ENCODE measurements at regions of chr12 and their contacts with region 1.

Region 1: DNA sequence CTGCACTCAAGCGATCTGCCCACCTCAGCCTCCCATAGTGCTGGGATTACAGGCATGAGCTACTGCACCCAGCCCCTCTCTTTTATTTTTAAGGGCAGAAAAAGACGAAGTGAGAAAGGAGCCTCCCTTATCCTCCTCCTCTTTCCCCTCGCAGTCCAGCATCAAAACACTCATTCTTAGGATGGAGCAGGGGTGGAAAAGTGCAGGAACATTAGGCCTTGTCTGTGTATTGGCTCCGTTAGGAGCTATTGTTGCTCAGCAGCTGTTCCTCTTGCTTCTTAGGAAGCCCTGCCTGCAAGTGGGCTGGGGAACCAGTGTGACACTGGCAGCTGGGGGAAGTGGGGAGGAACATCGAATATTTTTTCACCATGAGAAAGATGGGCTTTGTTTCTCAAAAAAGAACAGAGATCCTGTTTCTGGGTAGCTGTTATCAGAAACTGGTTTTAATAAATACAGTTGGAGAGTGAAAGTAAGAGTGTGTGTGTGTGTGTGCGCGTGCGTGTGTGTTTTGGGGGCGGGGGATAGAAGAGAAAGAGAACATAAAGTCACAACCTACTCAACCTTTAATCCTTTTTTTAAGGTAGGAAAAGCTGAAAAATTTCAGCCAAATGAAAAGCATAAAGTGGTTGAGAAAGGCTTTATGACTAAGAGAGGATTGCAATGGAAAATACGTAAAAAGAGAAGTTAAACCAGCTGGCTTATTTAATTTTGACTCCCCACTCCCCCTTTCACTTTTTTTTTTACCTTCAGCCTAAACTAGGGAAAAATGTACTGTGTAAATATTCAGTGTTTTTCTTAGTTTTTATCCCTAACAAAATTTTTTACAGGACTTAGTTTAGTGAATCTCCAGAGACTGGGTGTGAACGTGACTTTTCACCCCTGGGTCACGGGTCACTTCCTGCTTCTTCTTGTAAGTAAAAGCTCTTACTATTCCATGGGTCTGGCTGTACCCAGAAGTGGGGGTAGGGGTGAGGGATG is 197.2 kb upstream of the PLEKHG7 start:
- DNase-seq: peak; percentile 86
- ATAC-seq: peak; percentile 41
- H3K4me3 ChIP-seq: peak overlapping the region; percentile 46
- H3K27ac ChIP-seq: peak overlapping the region; percentile 100
- H3K4me1 ChIP-seq: peaks cover 53% of the 10 kb centered on the region
- H3K27me3 ChIP-seq: no peaks in the 10 kb centered on the region
- CTCF ChIP-seq: no peak
- EP300 ChIP-seq: peak; percentile 15 to 44; a peak in 2 of 4 replicates
- POLR2A ChIP-seq: peak; percentile 56; the same call in 1 of the 2 replicates
- RAD21 ChIP-seq: no peak

Region 2: GRCh38 chr12:91811481-91812287 is 693.9 kb before region 1 on chr12:
- CTCF ChIA-PET with region 1: interaction called, 10 read pairs
- POLR2A ChIA-PET with region 1: no interaction called
- RAD21 ChIA-PET with region 1: interaction called, 4 read pairs
- SMC1A ChIA-PET with region 1: interaction called, 10 read pairs
- in situ Hi-C with region 1: no loop called
- intact Hi-C with region 1: no loop called
- DNase-seq: peak; percentile 40
- ATAC-seq: peak; percentile 95
- H3K4me3 ChIP-seq: no peak overlapping the region
- H3K27ac ChIP-seq: no peak overlapping the region
- H3K4me1 ChIP-seq: no peaks in the 10 kb centered on the region
- H3K27me3 ChIP-seq: no peaks in the 10 kb centered on the region
- CTCF ChIP-seq: peak; percentile 68 to 86 (median 79)
- EP300 ChIP-seq: no peak
- POLR2A ChIP-seq: no peak
- RAD21 ChIP-seq: peak; percentile 87

Region 3: GRCh38 chr12:92338671-92339070 is 166.9 kb before region 1 on chr12:
- CTCF ChIA-PET with region 1: no interaction called
- POLR2A ChIA-PET with region 1: no interaction called
- RAD21 ChIA-PET with region 1: no interaction called
- SMC1A ChIA-PET with region 1: no interaction called
- in situ Hi-C with region 1: no loop called
- intact Hi-C with region 1: no loop called
- DNase-seq: no peak
- ATAC-seq: no peak
- H3K4me3 ChIP-seq: no peak overlapping the region
- H3K27ac ChIP-seq: no peak overlapping the region
- H3K4me1 ChIP-seq: no peaks in the 10 kb centered on the region
- H3K27me3 ChIP-seq: no peaks in the 10 kb centered on the region
- CTCF ChIP-seq: no peak
- EP300 ChIP-seq: no peak
- POLR2A ChIP-seq: no peak
- RAD21 ChIP-seq: no peak

Region 4: GRCh38 chr12:92408072-92408900 is 97.3 kb before region 1 on chr12:
- CTCF ChIA-PET with region 1: interaction called, 10 read pairs
- POLR2A ChIA-PET with region 1: interaction called, 14 read pairs
- RAD21 ChIA-PET with region 1: interaction called, 46 read pairs
- SMC1A ChIA-PET with region 1: interaction called, 56 read pairs
- in situ Hi-C with region 1: no loop called
- intact Hi-C with region 1: loop called (anchors 2 kb)
- DNase-seq: no peak
- ATAC-seq: peak; percentile 74
- H3K4me3 ChIP-seq: no peak overlapping the region
- H3K27ac ChIP-seq: peak overlapping the region; percentile 24
- H3K4me1 ChIP-seq: peaks cover 31% of the 10 kb centered on the region
- H3K27me3 ChIP-seq: no peaks in the 10 kb centered on the region
- CTCF ChIP-seq: peak; percentile 58 to 82 (median 72)
- EP300 ChIP-seq: no peak
- POLR2A ChIP-seq: no peak
- RAD21 ChIP-seq: peak; percentile 94

Region 5: DNA sequence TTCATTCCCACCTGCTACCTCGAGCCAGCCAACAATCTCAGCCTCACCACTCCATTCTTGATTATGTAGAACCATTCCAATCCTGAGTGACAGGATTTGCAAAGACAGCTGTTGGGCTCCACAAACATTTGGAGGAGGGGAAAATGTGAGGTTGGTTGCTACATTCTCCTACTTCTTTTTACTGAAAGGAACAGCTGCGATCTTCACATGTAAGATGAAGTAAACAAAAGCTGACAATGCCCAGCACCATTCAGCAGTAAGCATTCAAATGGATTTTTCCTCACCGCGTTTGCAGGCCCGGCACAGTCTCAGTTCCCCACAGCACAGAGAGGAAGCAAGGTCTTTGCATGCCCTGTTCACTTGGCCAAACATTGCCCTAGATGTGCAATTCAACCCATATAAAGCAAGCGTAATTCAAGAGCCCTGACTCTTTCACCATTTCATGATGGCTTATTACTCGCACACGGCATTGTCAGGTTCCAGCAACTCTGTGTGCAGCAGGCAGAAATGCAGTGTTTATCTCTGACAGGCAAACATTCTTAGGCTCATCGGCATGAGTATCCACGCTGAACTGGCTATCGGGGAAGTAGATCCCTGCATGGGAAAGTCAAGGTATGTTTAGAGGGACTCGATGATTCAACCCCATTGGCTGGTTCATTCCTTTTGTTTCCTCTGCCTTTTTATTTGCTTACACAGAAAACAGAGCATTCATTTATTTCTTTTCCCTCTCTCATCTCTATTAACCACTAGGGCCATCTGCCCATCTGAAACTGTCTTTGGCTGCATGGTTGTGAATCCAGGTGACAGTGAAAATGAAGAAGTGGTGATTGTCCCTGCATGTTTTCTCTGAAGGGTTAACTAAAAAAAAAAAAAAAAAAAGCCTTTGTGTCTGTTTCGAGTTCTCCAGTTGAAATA is 38.9 kb before region 1 on chr12:
- CTCF ChIA-PET with region 1: interaction called, 13 read pairs
- POLR2A ChIA-PET with region 1: interaction called, 32 read pairs
- RAD21 ChIA-PET with region 1: interaction called, 97 read pairs
- SMC1A ChIA-PET with region 1: interaction called, 64 read pairs
- in situ Hi-C with region 1: no loop called
- intact Hi-C with region 1: loop called (anchors 1 kb)
- DNase-seq: peak; percentile 90
- ATAC-seq: peak; percentile 39
- H3K4me3 ChIP-seq: peak overlapping the region; percentile 82
- H3K27ac ChIP-seq: peak overlapping the region; percentile 99
- H3K4me1 ChIP-seq: peaks cover 62% of the 10 kb centered on the region
- H3K27me3 ChIP-seq: no peaks in the 10 kb centered on the region
- CTCF ChIP-seq: no peak
- EP300 ChIP-seq: peak; percentile 65 to 70; a peak in 3 of 4 replicates
- POLR2A ChIP-seq: peak; percentile 85
- RAD21 ChIP-seq: peak; percentile 5

Region 6: GRCh38 chr12:92493816-92494215 is 11.7 kb before region 1 on chr12:
- CTCF ChIA-PET with region 1: interaction called, 36 read pairs
- POLR2A ChIA-PET with region 1: interaction called, 44 read pairs
- RAD21 ChIA-PET with region 1: interaction called, 198 read pairs
- SMC1A ChIA-PET with region 1: interaction called, 292 read pairs
- in situ Hi-C with region 1: no loop called
- intact Hi-C with region 1: no loop called
- DNase-seq: no peak
- ATAC-seq: peak; percentile 57
- H3K4me3 ChIP-seq: no peak overlapping the region
- H3K27ac ChIP-seq: peak overlapping the region; percentile 81
- H3K4me1 ChIP-seq: peaks cover 74% of the 10 kb centered on the region
- H3K27me3 ChIP-seq: no peaks in the 10 kb centered on the region
- CTCF ChIP-seq: no peak
- EP300 ChIP-seq: peak in 1 of 2 experiments; percentile 36; a peak in 1 of 4 replicates
- POLR2A ChIP-seq: no peak
- RAD21 ChIP-seq: no peak

Region 7: DNA sequence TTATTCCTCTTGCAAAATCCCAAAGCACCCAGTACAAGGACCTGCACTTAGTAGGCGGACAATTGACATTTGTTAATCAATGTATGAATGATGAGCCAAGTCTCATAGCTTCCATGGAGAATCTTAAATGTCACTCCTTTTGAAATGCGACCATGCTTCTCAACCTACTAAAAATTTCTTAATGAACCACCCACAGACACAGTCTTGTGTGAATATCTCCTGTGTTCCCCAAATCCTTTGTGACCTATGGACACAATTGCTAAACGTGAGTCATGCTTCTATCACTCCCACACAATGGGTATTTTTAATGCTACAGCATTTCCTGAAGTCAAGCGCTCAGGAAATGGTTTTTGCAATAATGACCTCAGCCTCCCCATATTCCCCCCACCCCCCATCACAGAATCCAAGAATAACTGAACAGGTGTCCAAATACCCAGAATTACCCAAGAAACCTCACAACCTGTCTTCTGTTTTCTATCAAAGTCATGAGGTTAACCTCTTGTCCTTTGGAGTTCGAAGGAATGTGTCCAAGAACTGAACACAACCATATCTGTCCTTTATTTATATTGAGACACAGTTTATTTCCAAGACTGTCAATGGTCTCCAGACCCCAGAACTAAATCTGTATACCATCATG is 33.7 kb after region 1 on chr12:
- CTCF ChIA-PET with region 1: interaction called, 59 read pairs
- POLR2A ChIA-PET with region 1: interaction called, 168 read pairs
- RAD21 ChIA-PET with region 1: interaction called, 346 read pairs
- SMC1A ChIA-PET with region 1: interaction called, 228 read pairs
- in situ Hi-C with region 1: no loop called
- intact Hi-C with region 1: loop called (anchors 1 kb)
- DNase-seq: peak; percentile 93
- ATAC-seq: peak; percentile 54
- H3K4me3 ChIP-seq: no peak overlapping the region
- H3K27ac ChIP-seq: peak overlapping the region; percentile 99
- H3K4me1 ChIP-seq: peaks cover 72% of the 10 kb centered on the region
- H3K27me3 ChIP-seq: no peaks in the 10 kb centered on the region
- CTCF ChIP-seq: no peak
- EP300 ChIP-seq: peak; percentile 90 to 98
- POLR2A ChIP-seq: no peak
- RAD21 ChIP-seq: 0 out of 2 replicates have a peak, but pooled peaks have one; percentile 36

Region 8: DNA sequence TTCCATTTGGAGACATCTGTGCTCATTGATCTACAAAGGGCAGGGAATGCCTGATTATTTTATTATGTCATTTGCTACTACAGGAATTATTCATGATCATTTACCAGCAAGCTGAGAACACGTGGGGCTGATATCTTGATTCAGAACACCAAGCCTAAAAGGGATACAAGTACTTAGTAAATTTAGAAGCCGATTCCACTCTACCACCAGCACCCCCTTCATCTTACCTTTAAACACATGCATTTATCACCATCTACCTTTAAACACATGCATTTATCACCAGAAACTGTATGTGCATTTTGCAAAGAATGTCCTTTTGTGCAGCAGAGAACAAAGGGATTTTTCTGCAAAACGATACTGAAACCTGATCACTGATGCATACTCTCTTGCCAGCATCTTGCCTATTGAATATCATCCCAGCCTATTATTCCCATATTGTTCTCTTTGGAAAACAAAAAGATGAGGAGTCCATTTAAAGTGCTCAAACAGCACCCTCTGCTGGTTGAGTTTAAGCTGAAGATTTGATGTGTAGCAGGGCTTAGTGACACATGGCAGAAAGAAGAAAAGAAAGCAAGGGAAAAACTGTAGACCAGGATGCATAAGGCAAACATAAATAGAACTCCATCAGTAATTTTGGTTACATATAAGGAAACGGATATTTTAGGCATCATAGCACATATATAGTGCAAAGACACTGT is 64.7 kb after region 1 on chr12:
- CTCF ChIA-PET with region 1: interaction called, 179 read pairs
- POLR2A ChIA-PET with region 1: interaction called, 170 read pairs
- RAD21 ChIA-PET with region 1: interaction called, 356 read pairs
- SMC1A ChIA-PET with region 1: interaction called, 805 read pairs
- in situ Hi-C with region 1: no loop called
- intact Hi-C with region 1: loop called (anchors 1 kb)
- DNase-seq: peak; percentile 93
- ATAC-seq: peak; percentile 94
- H3K4me3 ChIP-seq: no peak overlapping the region
- H3K27ac ChIP-seq: peak overlapping the region; percentile 55
- H3K4me1 ChIP-seq: peaks cover 11% of the 10 kb centered on the region; the same call in 1 of the 2 replicates
- H3K27me3 ChIP-seq: no peaks in the 10 kb centered on the region
- CTCF ChIP-seq: peak; percentile 47 to 76 (median 48); a peak in 5 of 6 replicates
- EP300 ChIP-seq: no peak
- POLR2A ChIP-seq: no peak
- RAD21 ChIP-seq: peak; percentile 81

Region 9: GRCh38 chr12:92608151-92609091 is 102.9 kb after region 1 on chr12:
- CTCF ChIA-PET with region 1: no interaction called
- POLR2A ChIA-PET with region 1: no interaction called
- RAD21 ChIA-PET with region 1: no interaction called
- SMC1A ChIA-PET with region 1: no interaction called
- in situ Hi-C with region 1: no loop called
- intact Hi-C with region 1: no loop called
- DNase-seq: peak; percentile 9
- ATAC-seq: no peak
- H3K4me3 ChIP-seq: no peak overlapping the region
- H3K27ac ChIP-seq: no peak overlapping the region
- H3K4me1 ChIP-seq: no peaks in the 10 kb centered on the region
- H3K27me3 ChIP-seq: no peaks in the 10 kb centered on the region
- CTCF ChIP-seq: peak; percentile 10 to 38 (median 34); a peak in 2 of 6 replicates
- EP300 ChIP-seq: no peak
- POLR2A ChIP-seq: no peak
- RAD21 ChIP-seq: peak; percentile 65

Measured in GM12878 (cell line).